Gastrocnemius medialis (tissue), 4 donors: ENCODE measurements at regions of chr1 and their contacts with region 1.

Region 1: GRCh38 chr1:28518000-28518744 is 12.3 kb downstream of the RCC1 start:
- DNase-seq: peak; percentile 79 to 85
- ATAC-seq: peak; percentile 90 to 91
- H3K4me3 ChIP-seq: peak overlapping the region; percentile 58 to 93 (median 67)
- H3K27ac ChIP-seq: peak overlapping the region; percentile 65 to 92 (median 82)
- H3K4me1 ChIP-seq: peaks cover 5 to 13% of the 10 kb centered on the region in 2 donors
- H3K27me3 ChIP-seq: no peaks in the 10 kb centered on the region
- CTCF ChIP-seq: peak; percentile 98 to 100 (median 99)
- POLR2A ChIP-seq: peak; percentile 45 to 63

Region 2: DNA sequence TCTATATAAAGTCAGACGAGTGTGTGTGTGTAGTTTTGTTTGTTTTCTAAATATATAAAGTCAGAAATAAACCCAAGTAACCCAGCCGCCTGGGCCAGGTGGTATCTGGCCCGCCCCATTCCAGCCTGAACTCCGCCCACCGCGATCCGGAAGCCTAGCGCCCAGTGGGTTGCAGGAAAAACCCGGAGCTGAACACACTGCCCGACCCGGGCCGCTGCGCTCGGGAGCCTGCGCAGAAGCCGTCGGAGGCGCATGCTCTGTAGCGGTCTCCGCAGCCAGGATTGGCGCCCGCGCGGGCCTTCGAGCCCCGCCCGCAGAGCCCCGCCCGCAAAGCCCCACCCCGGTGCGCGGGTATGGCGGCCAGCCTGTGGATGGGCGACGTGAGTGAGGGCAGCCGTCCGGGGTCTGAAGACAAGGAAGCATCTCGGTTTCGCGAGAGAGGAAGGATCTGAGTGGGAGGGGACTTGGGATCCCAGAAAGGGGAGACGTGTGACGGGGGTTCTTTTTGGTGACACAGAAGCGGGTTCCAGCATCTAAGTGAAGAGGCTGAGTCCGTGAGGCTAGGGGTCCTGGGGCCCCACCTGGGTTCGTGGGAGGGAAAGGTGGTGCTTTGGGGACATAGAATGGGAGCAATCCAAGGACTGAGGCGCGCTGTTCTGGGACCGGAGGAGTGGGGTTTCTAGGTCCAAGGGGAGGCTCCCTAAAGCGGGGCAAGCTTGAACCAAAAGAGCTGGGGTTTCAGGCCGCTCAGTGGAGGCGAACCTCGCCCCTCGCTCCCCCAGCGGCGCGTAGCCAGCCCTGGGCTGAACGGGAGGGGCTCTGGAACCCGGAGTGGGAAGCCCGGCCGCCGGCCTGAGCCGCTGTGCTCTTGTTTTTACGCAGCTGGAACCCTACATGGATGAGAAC is 34.8 kb after region 1 on chr1 and contains the start of gene TRNAU1AP:
- in situ Hi-C with region 1: no loop called
- intact Hi-C with region 1: loop called (anchors 1 kb)
- DNase-seq: peak; percentile 95 to 96
- ATAC-seq: peak; percentile 96
- H3K4me3 ChIP-seq: peak within 1 kb of the TSS; percentile 76 to 81 (median 80)
- H3K27ac ChIP-seq: peak within 1 kb of the TSS; percentile 86 to 93 (median 90)
- H3K4me1 ChIP-seq: peaks cover 8 to 14% of the 10 kb centered on the region in 2 donors
- H3K27me3 ChIP-seq: no peaks in the 10 kb centered on the region
- CTCF ChIP-seq: no peak
- POLR2A ChIP-seq: peak; percentile 80 to 87
- total RNA-seq, gene TRNAU1AP: 5.3 to 19.7 (median 12.0) TPM

Region 3: GRCh38 chr1:28565040-28565439 is 46.9 kb after region 1 on chr1:
- in situ Hi-C with region 1: no loop called
- intact Hi-C with region 1: no loop called
- DNase-seq: no peak
- ATAC-seq: no peak
- H3K4me3 ChIP-seq: no peak overlapping the region
- H3K27ac ChIP-seq: no peak overlapping the region
- H3K4me1 ChIP-seq: peaks cover 6 to 19% of the 10 kb centered on the region in 2 donors
- H3K27me3 ChIP-seq: no peaks in the 10 kb centered on the region
- CTCF ChIP-seq: no peak
- POLR2A ChIP-seq: no peak

Region 4: GRCh38 chr1:28581536-28582247 is 63.5 kb after region 1 on chr1:
- in situ Hi-C with region 1: no loop called
- intact Hi-C with region 1: loop called (anchors 1 kb)
- DNase-seq: peak; percentile 95
- ATAC-seq: peak; percentile 92 to 96
- H3K4me3 ChIP-seq: peak overlapping the region; percentile 76 to 95 (median 88)
- H3K27ac ChIP-seq: peak overlapping the region; percentile 89 to 94 (median 91)
- H3K4me1 ChIP-seq: peaks cover 23 to 25% of the 10 kb centered on the region in 2 donors
- H3K27me3 ChIP-seq: no peaks in the 10 kb centered on the region
- CTCF ChIP-seq: peak in 4 of 5 experiments; percentile 22 to 42 (median 30)
- POLR2A ChIP-seq: peak; percentile 96 to 99

Region 5: DNA sequence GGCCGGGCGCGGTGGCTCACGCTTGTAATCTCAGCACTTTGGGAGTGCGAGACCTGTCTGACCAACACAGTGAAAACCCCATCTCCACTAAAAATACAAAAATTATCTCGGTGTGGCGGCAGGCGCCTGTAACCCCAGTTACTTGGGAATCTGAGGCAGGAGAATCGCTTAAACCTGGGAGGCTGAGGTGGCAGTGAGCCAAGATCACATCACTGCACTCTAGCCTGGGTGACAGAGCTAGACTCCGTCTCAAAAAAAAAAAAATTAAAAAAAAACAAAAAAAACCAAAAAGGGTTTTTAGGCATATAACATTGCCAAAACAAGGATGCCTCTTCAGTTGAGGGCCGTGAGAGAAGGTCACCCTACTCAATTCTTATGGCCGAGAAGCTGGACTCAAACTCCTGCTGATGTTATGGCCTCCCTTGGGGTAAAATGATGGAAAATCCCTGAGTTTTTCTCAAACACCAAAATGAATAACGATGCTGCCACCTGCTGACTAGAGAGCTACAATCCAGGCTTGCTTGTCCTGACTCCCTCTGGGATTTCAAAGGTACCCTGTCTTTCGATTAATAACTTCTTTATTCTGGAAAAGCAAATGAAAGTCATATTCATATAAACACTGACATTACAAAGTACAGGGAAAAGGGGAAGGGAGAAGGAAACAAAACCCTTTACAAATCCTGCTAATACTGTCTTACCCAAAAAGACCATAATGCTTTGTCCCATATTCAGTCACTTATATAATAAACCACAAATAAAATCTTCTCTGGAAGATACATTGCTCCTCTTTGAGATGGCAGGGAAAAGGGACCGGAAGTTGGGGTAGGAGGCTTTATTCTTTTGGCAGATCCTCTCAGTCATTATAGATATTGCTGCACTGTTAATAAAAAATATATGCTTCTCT is 84.6 kb after region 1 on chr1:
- in situ Hi-C with region 1: loop called (anchors 5 to 25 kb)
- intact Hi-C with region 1: loop called (anchors 2 kb)
- DNase-seq: peak in 1 of 2 donors; percentile 13
- ATAC-seq: peak in 1 of 2 donors; percentile 47
- H3K4me3 ChIP-seq: no peak overlapping the region
- H3K27ac ChIP-seq: peak overlapping the region in 1 of 4 donors; percentile 26
- H3K4me1 ChIP-seq: no peaks in the 10 kb centered on the region
- H3K27me3 ChIP-seq: no peaks in the 10 kb centered on the region
- CTCF ChIP-seq: peak; percentile 15 to 56 (median 53)
- POLR2A ChIP-seq: no peak

Region 6: GRCh38 chr1:28642847-28643635 is 124.9 kb after region 1 on chr1 and contains the start of gene TAF12:
- in situ Hi-C with region 1: no loop called
- intact Hi-C with region 1: no loop called
- DNase-seq: peak; percentile 84 to 91
- ATAC-seq: peak; percentile 83 to 90
- H3K4me3 ChIP-seq: peak within 1 kb of the TSS; percentile 71 to 95 (median 81)
- H3K27ac ChIP-seq: peak within 1 kb of the TSS; percentile 85 to 96 (median 92)
- H3K4me1 ChIP-seq: peaks cover 26 to 50% of the 10 kb centered on the region in 2 donors
- H3K27me3 ChIP-seq: no peaks in the 10 kb centered on the region
- CTCF ChIP-seq: peak; percentile 10 to 55 (median 50)
- POLR2A ChIP-seq: peak; percentile 92 to 94
- total RNA-seq, gene TAF12: 33.5 to 81.6 (median 65.0) TPM

Region 7: GRCh38 chr1:28736450-28737306 is 218.5 kb after region 1 on chr1 and contains the start of gene YTHDF2:
- in situ Hi-C with region 1: no loop called
- intact Hi-C with region 1: loop called (anchors 5 kb)
- DNase-seq: peak; percentile 92 to 96
- ATAC-seq: peak; percentile 91 to 95
- H3K4me3 ChIP-seq: peak within 1 kb of the TSS; percentile 82 to 94 (median 90)
- H3K27ac ChIP-seq: peak within 1 kb of the TSS; percentile 90 to 97 (median 96)
- H3K4me1 ChIP-seq: peaks cover 35 to 42% of the 10 kb centered on the region in 2 donors
- H3K27me3 ChIP-seq: no peaks in the 10 kb centered on the region
- CTCF ChIP-seq: peak; percentile 95 to 97 (median 96)
- POLR2A ChIP-seq: peak; percentile 94 to 95
- total RNA-seq, gene YTHDF2: 35.6 to 50.6 (median 47.0) TPM

Region 8: GRCh38 chr1:28877132-28877781 is 359.1 kb after region 1 on chr1:
- in situ Hi-C with region 1: loop called (anchors 10 to 25 kb)
- intact Hi-C with region 1: loop called (anchors 1 kb)
- DNase-seq: peak; percentile 45 to 66
- ATAC-seq: peak; percentile 70 to 76
- H3K4me3 ChIP-seq: no peak overlapping the region
- H3K27ac ChIP-seq: no peak overlapping the region
- H3K4me1 ChIP-seq: no peaks in the 10 kb centered on the region
- H3K27me3 ChIP-seq: no peaks in the 10 kb centered on the region
- CTCF ChIP-seq: peak; percentile 89 to 95 (median 91)
- POLR2A ChIP-seq: no peak

Region 9: DNA sequence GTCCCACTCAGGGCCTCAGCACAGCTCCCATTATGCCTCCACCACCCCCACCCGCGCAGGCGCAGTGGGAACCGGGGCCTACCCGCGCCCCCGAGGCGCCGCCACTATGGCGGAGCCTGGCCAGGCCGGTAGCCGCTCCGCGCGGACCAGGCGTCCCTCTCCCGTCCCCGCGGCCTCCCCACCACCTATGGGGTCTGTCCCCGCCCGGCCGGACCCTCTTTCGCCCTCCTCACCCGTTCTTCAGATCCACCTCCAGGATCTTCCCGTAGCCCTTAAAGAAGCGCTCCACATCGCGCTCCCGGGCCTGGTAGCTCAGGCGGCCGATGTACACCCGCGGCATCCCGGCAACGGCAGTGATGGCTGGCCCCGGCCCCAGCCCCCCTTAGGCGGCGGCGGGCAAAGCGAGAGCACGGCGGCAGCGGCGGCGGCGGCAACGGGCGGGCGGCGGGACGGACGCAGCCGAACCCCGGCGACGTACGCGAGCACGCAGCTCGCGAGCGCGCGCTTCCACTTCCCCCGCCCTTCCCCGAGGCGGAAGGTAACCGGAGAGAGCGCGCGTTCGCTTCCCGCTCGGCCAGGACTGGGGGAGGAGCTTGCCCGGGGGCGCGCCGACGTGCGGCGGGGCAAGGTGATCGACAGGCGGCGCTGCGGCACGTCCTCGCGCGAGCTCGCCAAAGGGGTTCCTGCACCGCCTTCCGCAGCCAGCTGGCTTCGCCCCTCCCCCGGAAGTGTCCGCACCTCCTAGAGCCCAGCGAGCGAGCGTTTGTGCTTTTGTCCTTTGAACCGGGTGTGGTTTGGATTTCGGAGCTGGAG is 663.4 kb after region 1 on chr1 and contains the start of gene SRSF4:
- in situ Hi-C with region 1: no loop called
- intact Hi-C with region 1: loop called (anchors 10 kb)
- DNase-seq: peak; percentile 99
- ATAC-seq: peak; percentile 90 to 92
- H3K4me3 ChIP-seq: peak within 1 kb of the TSS; percentile 78 to 98 (median 82)
- H3K27ac ChIP-seq: peak within 1 kb of the TSS; percentile 94 to 100 (median 97)
- H3K4me1 ChIP-seq: peaks cover 40 to 48% of the 10 kb centered on the region in 2 donors
- H3K27me3 ChIP-seq: no peaks in the 10 kb centered on the region
- CTCF ChIP-seq: peak; percentile 57 to 81 (median 74)
- POLR2A ChIP-seq: peak; percentile 95 to 98
- total RNA-seq, gene SRSF4: 42.4 to 72.5 (median 65.4) TPM